GM12878 (cell line): ENCODE measurements at regions of chr19 and their contacts with region 1.

Region 1: GRCh38 chr19:48419158-48419920 is 25.9 kb downstream of the GRIN2D start:
- DNase-seq: peak; percentile 57
- ATAC-seq: peak; percentile 93
- H3K4me3 ChIP-seq: peak overlapping the region; percentile 25; the same call in 1 of the 2 replicates
- H3K27ac ChIP-seq: peak overlapping the region; percentile 39
- H3K4me1 ChIP-seq: peaks cover 8% of the 10 kb centered on the region
- H3K27me3 ChIP-seq: no peaks in the 10 kb centered on the region
- CTCF ChIP-seq: no peak
- EP300 ChIP-seq: 0 out of 4 replicates have a peak, but pooled peaks of 1 of the 2 experiments have one; percentile 40
- POLR2A ChIP-seq: no peak
- RAD21 ChIP-seq: no peak

Region 2: GRCh38 chr19:48403606-48404005 is 15.7 kb before region 1 on chr19:
- CTCF ChIA-PET with region 1: interaction called, 3 read pairs
- POLR2A ChIA-PET with region 1: interaction called, 11 read pairs
- RAD21 ChIA-PET with region 1: no interaction called
- SMC1A ChIA-PET with region 1: interaction called, 3 read pairs
- in situ Hi-C with region 1: no loop called
- intact Hi-C with region 1: no loop called
- DNase-seq: no peak
- ATAC-seq: peak; percentile 93
- H3K4me3 ChIP-seq: no peak overlapping the region
- H3K27ac ChIP-seq: no peak overlapping the region
- H3K4me1 ChIP-seq: peaks cover 6% of the 10 kb centered on the region
- H3K27me3 ChIP-seq: no peaks in the 10 kb centered on the region
- CTCF ChIP-seq: no peak
- EP300 ChIP-seq: no peak
- POLR2A ChIP-seq: no peak
- RAD21 ChIP-seq: no peak